ENCODE measurements at regions of chr16 and their contacts with region 1.

Region 1: GRCh38 chr16:3880623-3881498 is at the start of gene CREBBP:
- DNase-seq: peak; percentile 80 to 95 (median 87)
- ATAC-seq: peak; percentile 84
- H3K4me3 ChIP-seq: peak within 1 kb of the TSS; percentile 70 to 80
- H3K4me3 Mint-ChIP-seq: peak within 1 kb of the TSS; percentile 88
- H3K27ac ChIP-seq: peak within 1 kb of the TSS in 1 of 2 experiments; percentile 71
- H3K27ac Mint-ChIP-seq: peak within 1 kb of the TSS; percentile 94
- H3K4me1 ChIP-seq: peaks cover 32% of the 10 kb centered on the region
- H3K4me1 Mint-ChIP-seq: peaks cover 38% of the 10 kb centered on the region
- H3K27me3 ChIP-seq: no peaks in the 10 kb centered on the region
- H3K27me3 Mint-ChIP-seq: peaks cover 2% of the 10 kb centered on the region
- CTCF ChIP-seq: no peak
- total RNA-seq, gene CREBBP: 186 to 189 TPM

Region 2: GRCh38 chr16:2244245-2244691 is 1636.6 kb before region 1 on chr16:
- CTCF ChIA-PET with region 1: no interaction called
- POLR2A ChIA-PET with region 1: no interaction called
- intact Hi-C with region 1: no loop called
- DNase-seq: no peak
- ATAC-seq: no peak
- H3K4me3 ChIP-seq: no peak overlapping the region
- H3K4me3 Mint-ChIP-seq: no peak overlapping the region
- H3K27ac ChIP-seq: no peak overlapping the region
- H3K27ac Mint-ChIP-seq: no peak overlapping the region
- H3K4me1 ChIP-seq: no peaks in the 10 kb centered on the region
- H3K4me1 Mint-ChIP-seq: peaks cover 1% of the 10 kb centered on the region
- H3K27me3 ChIP-seq: no peaks in the 10 kb centered on the region
- H3K27me3 Mint-ChIP-seq: no peaks in the 10 kb centered on the region
- CTCF ChIP-seq: no peak

Region 3: GRCh38 chr16:3690470-3690928 is 190.4 kb before region 1 on chr16:
- CTCF ChIA-PET with region 1: interaction called, 24 read pairs
- POLR2A ChIA-PET with region 1: interaction called, 3 read pairs
- intact Hi-C with region 1: loop called (anchors 1 kb)
- DNase-seq: peak; percentile 69 to 90 (median 85)
- ATAC-seq: peak; percentile 100
- H3K4me3 ChIP-seq: no peak overlapping the region
- H3K4me3 Mint-ChIP-seq: peak overlapping the region; percentile 19
- H3K27ac ChIP-seq: no peak overlapping the region
- H3K27ac Mint-ChIP-seq: no peak overlapping the region
- H3K4me1 ChIP-seq: peaks cover 8% of the 10 kb centered on the region
- H3K4me1 Mint-ChIP-seq: peaks cover 7% of the 10 kb centered on the region
- H3K27me3 ChIP-seq: no peaks in the 10 kb centered on the region
- H3K27me3 Mint-ChIP-seq: no peaks in the 10 kb centered on the region
- CTCF ChIP-seq: peak; percentile 90

Region 4: GRCh38 chr16:3717235-3718018 is 163.4 kb before region 1 on chr16 and contains the start of gene TRAP1:
- CTCF ChIA-PET with region 1: no interaction called
- POLR2A ChIA-PET with region 1: interaction called, 5 read pairs
- intact Hi-C with region 1: loop called in 1 of 2 experiments (anchors 1 kb)
- DNase-seq: peak; percentile 85 to 96 (median 91)
- ATAC-seq: peak; percentile 97
- H3K4me3 ChIP-seq: peak within 1 kb of the TSS; percentile 94 to 96
- H3K4me3 Mint-ChIP-seq: peak within 1 kb of the TSS; percentile 91
- H3K27ac ChIP-seq: peak within 1 kb of the TSS; percentile 84 to 88
- H3K27ac Mint-ChIP-seq: peak within 1 kb of the TSS; percentile 92
- H3K4me1 ChIP-seq: peaks cover 15% of the 10 kb centered on the region
- H3K4me1 Mint-ChIP-seq: peaks cover 38% of the 10 kb centered on the region
- H3K27me3 ChIP-seq: no peaks in the 10 kb centered on the region
- H3K27me3 Mint-ChIP-seq: no peaks in the 10 kb centered on the region
- CTCF ChIP-seq: no peak
- total RNA-seq, gene TRAP1: 48.3 to 57.4 TPM

Region 5: DNA sequence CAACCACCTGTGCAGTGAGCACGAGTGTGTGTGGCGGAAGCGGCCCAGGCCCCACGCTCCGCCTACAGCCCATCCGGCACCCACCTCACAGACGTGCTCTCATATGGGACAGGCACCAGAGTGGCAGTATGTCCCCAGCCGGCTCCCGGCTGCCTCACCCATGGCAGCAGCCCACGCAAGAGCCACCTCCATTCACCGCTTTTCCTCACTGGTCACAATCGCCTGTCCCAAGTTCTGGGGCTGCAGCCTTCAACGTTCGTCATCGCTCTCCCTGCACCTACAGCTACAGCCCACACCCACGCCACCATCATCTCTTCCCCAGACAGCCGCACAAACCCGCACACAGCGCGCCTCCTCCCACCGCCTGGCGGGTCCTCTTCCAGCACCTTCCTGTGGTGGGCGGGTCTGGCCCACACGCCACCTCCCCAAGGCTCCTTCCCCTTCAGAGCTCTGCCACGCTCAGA is 146.1 kb before region 1 on chr16:
- CTCF ChIA-PET with region 1: no interaction called
- POLR2A ChIA-PET with region 1: no interaction called
- intact Hi-C with region 1: no loop called
- DNase-seq: no peak
- ATAC-seq: no peak
- H3K4me3 ChIP-seq: no peak overlapping the region
- H3K4me3 Mint-ChIP-seq: no peak overlapping the region
- H3K27ac ChIP-seq: no peak overlapping the region
- H3K27ac Mint-ChIP-seq: no peak overlapping the region
- H3K4me1 ChIP-seq: no peaks in the 10 kb centered on the region
- H3K4me1 Mint-ChIP-seq: no peaks in the 10 kb centered on the region
- H3K27me3 ChIP-seq: no peaks in the 10 kb centered on the region
- H3K27me3 Mint-ChIP-seq: no peaks in the 10 kb centered on the region
- CTCF ChIP-seq: no peak

Region 6: DNA sequence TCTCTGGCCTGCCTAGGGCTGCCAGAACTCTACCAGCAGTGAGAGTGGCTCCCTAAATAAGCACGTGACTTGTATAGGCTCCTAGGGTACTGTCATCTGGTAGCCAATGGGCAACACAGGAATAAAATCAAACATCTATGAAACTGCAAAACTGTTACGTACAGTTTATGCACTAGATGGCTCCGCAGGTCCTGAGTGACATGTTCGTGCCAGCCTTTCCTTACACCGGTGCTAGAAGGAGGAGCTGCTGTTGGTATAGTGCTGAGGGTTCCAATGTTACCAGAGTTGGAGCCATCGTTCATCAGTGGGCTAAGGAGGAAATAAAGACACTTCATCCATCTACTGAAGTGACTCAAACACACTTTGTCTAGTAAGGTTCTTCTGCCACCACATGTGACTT is 100.3 kb before region 1 on chr16:
- CTCF ChIA-PET with region 1: interaction called, 7 read pairs
- POLR2A ChIA-PET with region 1: no interaction called
- intact Hi-C with region 1: loop called (anchors 5 kb)
- DNase-seq: peak in 3 of 9 experiments; percentile 17 to 56 (median 37)
- ATAC-seq: peak; percentile 71
- H3K4me3 ChIP-seq: no peak overlapping the region
- H3K4me3 Mint-ChIP-seq: no peak overlapping the region
- H3K27ac ChIP-seq: no peak overlapping the region
- H3K27ac Mint-ChIP-seq: peak overlapping the region; percentile 37
- H3K4me1 ChIP-seq: no peaks in the 10 kb centered on the region
- H3K4me1 Mint-ChIP-seq: peaks cover 29% of the 10 kb centered on the region
- H3K27me3 ChIP-seq: no peaks in the 10 kb centered on the region
- H3K27me3 Mint-ChIP-seq: no peaks in the 10 kb centered on the region
- CTCF ChIP-seq: no peak

Region 7: GRCh38 chr16:3797904-3798811 is 82.7 kb before region 1 on chr16:
- CTCF ChIA-PET with region 1: interaction called, 6 read pairs
- POLR2A ChIA-PET with region 1: no interaction called
- intact Hi-C with region 1: loop called in 1 of 2 experiments (anchors 5 kb)
- DNase-seq: peak in 2 of 9 experiments; percentile 28 to 40
- ATAC-seq: no peak
- H3K4me3 ChIP-seq: no peak overlapping the region
- H3K4me3 Mint-ChIP-seq: peak overlapping the region; percentile 58
- H3K27ac ChIP-seq: no peak overlapping the region
- H3K27ac Mint-ChIP-seq: no peak overlapping the region
- H3K4me1 ChIP-seq: peaks cover 60% of the 10 kb centered on the region
- H3K4me1 Mint-ChIP-seq: peaks cover 78% of the 10 kb centered on the region
- H3K27me3 ChIP-seq: no peaks in the 10 kb centered on the region
- H3K27me3 Mint-ChIP-seq: no peaks in the 10 kb centered on the region
- CTCF ChIP-seq: no peak

Region 8: DNA sequence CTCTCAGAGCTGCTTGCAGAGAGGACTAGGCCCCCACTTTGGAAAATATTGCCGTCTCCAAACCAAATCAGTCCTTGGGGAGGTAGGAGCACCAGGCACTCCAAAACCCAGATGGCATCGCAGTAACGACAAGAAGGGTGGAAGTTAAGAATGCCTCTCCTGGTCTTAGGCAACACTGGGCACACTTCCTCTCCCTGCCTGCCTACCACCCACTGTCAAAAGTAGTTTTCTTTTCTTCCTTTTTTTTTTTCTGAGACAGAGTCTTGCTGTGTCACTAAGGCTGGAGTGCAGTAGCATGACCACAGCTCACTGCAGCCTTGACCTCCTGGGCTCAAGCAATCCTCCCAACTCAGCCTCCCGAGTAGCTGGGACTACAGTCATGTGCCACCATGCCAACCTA is 313.8 kb after region 1 on chr16:
- CTCF ChIA-PET with region 1: no interaction called
- POLR2A ChIA-PET with region 1: no interaction called
- intact Hi-C with region 1: no loop called
- DNase-seq: no peak
- ATAC-seq: no peak
- H3K4me3 ChIP-seq: no peak overlapping the region
- H3K4me3 Mint-ChIP-seq: no peak overlapping the region
- H3K27ac ChIP-seq: no peak overlapping the region
- H3K27ac Mint-ChIP-seq: no peak overlapping the region
- H3K4me1 ChIP-seq: no peaks in the 10 kb centered on the region
- H3K4me1 Mint-ChIP-seq: no peaks in the 10 kb centered on the region
- H3K27me3 ChIP-seq: no peaks in the 10 kb centered on the region
- H3K27me3 Mint-ChIP-seq: no peaks in the 10 kb centered on the region
- CTCF ChIP-seq: no peak

Region 9: DNA sequence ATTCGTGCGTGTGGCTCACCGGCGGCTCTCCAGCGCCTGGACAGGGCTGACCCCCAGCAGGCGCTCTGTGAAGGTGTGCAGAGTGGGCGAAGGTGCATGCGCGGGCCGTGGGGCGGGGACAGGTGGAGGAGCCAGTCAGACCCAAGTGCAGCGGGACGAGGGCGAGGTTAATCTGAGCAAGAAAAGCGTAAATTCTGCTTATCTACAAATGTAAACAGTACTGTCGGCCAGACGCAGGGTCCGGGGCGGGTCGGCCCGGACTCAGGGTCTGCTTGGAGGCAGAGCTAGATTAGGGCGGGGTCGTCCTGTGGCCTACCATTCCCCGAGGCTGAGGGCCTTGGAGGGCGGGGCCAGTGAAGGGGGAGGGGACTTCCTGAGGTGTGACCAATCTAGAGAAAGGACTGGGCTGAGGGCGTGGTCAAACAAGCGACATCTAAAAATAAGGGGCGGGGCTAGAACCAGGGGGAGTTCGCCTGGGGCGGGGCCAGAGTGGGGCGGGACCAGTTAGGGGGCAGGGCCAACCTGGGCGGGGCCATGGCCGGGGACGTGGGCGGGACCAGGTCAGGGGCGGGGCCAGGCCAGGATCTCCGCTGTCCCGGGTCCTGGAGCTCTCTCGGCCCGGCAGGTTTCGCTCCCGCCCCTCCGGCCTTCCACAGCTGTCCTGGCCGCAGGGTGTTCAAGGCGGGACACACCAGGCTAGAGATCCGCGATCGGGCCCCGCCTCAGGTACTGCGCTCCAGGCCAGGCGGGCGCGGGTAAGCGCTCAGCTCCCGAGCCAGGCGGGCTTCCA is 1077.1 kb after region 1 on chr16 and contains the start of gene SEC14L5:
- CTCF ChIA-PET with region 1: no interaction called
- POLR2A ChIA-PET with region 1: no interaction called
- intact Hi-C with region 1: loop called in 1 of 2 experiments (anchors 5 kb)
- DNase-seq: peak; percentile 72 to 92 (median 87)
- ATAC-seq: peak; percentile 98
- H3K4me3 ChIP-seq: peak within 1 kb of the TSS; percentile 40 to 70
- H3K4me3 Mint-ChIP-seq: peak within 1 kb of the TSS; percentile 82
- H3K27ac ChIP-seq: no peak within 1 kb of the TSS
- H3K27ac Mint-ChIP-seq: no peak within 1 kb of the TSS
- H3K4me1 ChIP-seq: peaks cover 15% of the 10 kb centered on the region
- H3K4me1 Mint-ChIP-seq: peaks cover 20% of the 10 kb centered on the region
- H3K27me3 ChIP-seq: peaks cover 6 to 22% of the 10 kb centered on the region in 2 experiments
- H3K27me3 Mint-ChIP-seq: peaks cover 55% of the 10 kb centered on the region
- CTCF ChIP-seq: no peak
- total RNA-seq, gene SEC14L5: not detected